HepG2 (cell line): ENCODE measurements at regions of chr6 and their contacts with region 1.

Region 1: GRCh38 chr6:11575408-11576033 is 38.0 kb downstream of the TMEM170B start:
- DNase-seq: peak; percentile 82
- ATAC-seq: peak; percentile 100
- H3K4me3 ChIP-seq: no peak overlapping the region
- H3K27ac ChIP-seq: no peak overlapping the region
- H3K4me1 ChIP-seq: peaks cover 6% of the 10 kb centered on the region
- H3K27me3 ChIP-seq: no peaks in the 10 kb centered on the region
- CTCF ChIP-seq: peak; percentile 99
- EP300 ChIP-seq: peak in 1 of 2 experiments; percentile 18; a peak in 1 of 4 replicates
- POLR2A ChIP-seq: no peak
- RAD21 ChIP-seq: peak; percentile 89

Region 2: DNA sequence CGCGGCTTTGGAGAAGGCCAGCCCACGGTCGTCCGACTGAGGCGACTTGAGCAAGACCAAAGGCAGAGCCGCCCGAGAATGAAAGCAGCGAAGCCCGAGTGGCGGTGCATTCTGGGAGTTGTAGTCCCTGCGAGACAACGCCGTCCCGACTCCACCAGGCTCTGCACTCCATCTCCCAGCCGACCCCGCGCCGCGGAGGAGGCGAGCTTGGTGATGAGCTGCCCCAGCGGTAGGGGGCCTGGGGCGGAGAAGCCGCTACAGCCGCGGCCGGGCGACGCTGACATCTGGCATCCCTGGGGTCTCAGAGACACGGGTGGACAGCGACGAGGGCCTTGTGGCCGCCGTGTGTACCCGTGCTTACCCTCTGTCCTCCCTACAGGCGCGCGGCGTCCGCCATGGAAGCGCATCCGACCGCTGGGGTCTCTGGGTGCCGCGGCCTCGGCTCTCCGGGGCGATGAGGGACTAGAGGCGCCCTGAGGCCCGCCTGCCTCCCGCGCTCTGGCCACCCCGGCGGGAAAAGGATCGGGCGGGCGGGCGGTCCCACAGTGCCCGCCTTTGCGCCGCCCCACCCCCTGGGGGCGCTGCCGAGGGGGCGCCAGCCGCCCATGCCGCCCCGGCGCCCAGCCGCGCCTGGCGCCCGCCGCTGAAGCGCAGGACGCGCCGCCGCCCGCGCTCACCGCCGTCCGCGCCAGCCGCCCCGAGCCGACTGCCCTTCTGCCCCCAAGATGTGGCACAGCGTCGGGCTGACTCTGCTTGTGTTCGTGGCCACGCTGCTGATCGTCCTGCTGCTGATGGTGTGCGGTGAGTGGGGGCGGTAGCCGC is 481.7 kb before region 1 on chr6 and contains the start of gene SMIM13:
- CTCF ChIA-PET with region 1: interaction called, 4 read pairs
- POLR2A ChIA-PET with region 1: interaction called, 3 read pairs
- in situ Hi-C with region 1: no loop called
- intact Hi-C with region 1: loop called (anchors 1 kb)
- DNase-seq: peak; percentile 98
- ATAC-seq: peak; percentile 97
- H3K4me3 ChIP-seq: peak within 1 kb of the TSS; percentile 93 to 99 (median 97)
- H3K27ac ChIP-seq: peak within 1 kb of the TSS; percentile 90
- H3K4me1 ChIP-seq: peaks cover 44% of the 10 kb centered on the region
- H3K27me3 ChIP-seq: no peaks in the 10 kb centered on the region; a peak in 1 of 5 replicates
- CTCF ChIP-seq: peak; percentile 67
- EP300 ChIP-seq: peak in 1 of 2 experiments; percentile 20; a peak in 2 of 4 replicates
- POLR2A ChIP-seq: peak; percentile 89 to 92
- RAD21 ChIP-seq: peak; percentile 79
- total RNA-seq, gene SMIM13: 9.5 and 10.2 TPM in 2 replicates

Region 3: DNA sequence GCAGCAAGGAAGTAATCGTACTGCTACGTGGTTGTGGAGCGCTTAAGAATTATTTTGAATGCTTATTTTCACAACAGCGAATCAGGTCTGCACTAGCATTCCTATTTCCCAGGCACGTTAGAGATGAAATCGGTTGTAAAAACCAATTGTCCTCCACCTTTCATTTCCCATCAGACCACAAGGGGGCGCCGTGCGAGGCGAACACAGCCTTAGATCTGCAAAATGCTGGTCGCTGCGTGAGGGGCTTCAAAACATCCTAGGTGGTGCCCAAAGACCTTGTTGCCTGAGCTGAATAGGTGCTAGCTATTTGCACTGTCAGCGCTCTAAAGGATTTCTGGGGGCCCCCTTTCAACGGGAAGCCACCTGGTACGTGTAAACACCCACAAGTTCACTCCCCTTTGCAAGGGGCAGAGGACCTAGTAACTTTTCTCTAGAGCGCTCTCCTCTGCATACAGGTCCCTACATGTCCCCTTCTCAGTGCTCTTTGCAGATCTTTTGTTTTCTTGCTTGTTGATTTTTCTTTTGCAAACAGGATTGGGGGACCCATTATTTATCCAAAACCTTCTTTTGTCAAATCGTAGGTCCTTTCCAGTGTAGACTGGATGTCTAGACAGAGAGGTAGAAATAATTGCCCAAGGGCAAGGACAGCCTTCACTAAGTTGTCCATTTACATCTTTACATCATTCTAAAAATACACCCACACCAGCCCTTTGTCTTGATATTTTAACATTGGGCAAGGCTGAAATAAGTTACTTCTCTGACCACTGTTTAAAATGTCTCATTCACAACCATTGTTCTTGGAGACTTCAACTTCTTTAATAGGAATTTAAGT is 402.8 kb before region 1 on chr6:
- CTCF ChIA-PET with region 1: interaction called, 7 read pairs
- POLR2A ChIA-PET with region 1: no interaction called
- in situ Hi-C with region 1: no loop called
- intact Hi-C with region 1: loop called (anchors 10 kb)
- DNase-seq: peak; percentile 66
- ATAC-seq: peak; percentile 86
- H3K4me3 ChIP-seq: peak overlapping the region in 1 of 3 experiments; percentile 47; a peak in 2 of 6 replicates
- H3K27ac ChIP-seq: no peak overlapping the region
- H3K4me1 ChIP-seq: peaks cover 36% of the 10 kb centered on the region
- H3K27me3 ChIP-seq: no peaks in the 10 kb centered on the region
- CTCF ChIP-seq: peak; percentile 96
- EP300 ChIP-seq: no peak
- POLR2A ChIP-seq: no peak
- RAD21 ChIP-seq: peak; percentile 83

Region 4: DNA sequence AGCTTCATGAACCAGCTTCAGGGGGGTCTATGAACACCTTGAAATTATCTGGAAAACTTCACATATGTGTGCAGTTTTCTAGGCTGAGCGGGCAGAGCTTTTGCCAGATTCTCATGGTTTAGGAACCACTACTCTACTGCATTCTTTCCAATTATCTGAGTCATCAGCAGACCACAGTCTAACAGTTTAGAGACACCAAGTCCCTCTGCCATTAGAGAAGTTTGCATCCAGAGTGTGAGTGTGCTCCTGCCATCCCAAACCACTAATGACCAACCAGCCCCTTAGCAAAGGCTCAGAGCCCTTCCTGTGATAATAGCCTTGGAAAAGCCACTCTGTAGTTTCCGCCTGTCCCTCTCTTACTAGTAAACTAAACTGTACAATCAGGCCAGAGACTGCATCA is 1237.8 kb after region 1 on chr6:
- CTCF ChIA-PET with region 1: no interaction called
- POLR2A ChIA-PET with region 1: no interaction called
- in situ Hi-C with region 1: no loop called
- intact Hi-C with region 1: no loop called
- DNase-seq: no peak
- ATAC-seq: no peak
- H3K4me3 ChIP-seq: no peak overlapping the region
- H3K27ac ChIP-seq: no peak overlapping the region
- H3K4me1 ChIP-seq: no peaks in the 10 kb centered on the region
- H3K27me3 ChIP-seq: no peaks in the 10 kb centered on the region
- CTCF ChIP-seq: no peak
- EP300 ChIP-seq: no peak
- POLR2A ChIP-seq: no peak
- RAD21 ChIP-seq: no peak